CD4-positive, alpha-beta T cell (primary cell): ENCODE measurements at regions of chr1 and their contacts with region 1.

Region 1: DNA sequence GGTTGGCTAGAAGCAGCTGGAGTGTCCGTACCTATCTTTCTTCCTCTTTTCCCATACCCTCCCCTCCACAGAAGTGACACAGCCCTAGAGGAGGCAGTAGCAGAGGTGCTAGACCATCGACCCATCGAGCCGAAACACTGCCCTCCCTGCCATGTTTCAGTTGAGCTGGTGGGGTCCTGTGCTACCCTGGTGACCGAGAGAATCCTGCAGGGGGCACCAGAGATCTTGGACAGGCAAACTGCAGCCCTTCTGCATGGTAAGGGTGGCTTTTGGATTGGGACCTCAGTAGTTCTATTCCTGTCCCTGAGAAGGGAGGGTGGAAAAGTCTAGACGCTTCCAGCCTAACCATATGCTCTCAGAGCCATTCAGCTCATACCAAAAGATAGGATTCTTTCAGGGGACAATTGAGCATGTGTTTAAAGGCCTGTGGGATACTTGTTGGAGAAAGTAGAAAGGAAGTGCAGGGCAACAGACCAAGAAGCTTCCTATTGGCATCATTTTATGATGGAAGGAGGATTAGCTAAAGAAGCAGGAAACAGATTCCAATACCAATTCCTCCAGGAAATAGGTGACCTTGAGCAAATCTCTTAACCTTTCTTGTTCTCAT is 11.7 kb upstream of the BNIPL start:
- DNase-seq: peak; percentile 81 to 95 (median 88)
- ATAC-seq: peak; percentile 100
- H3K4me3 ChIP-seq: no peak overlapping the region
- H3K4me3 Mint-ChIP-seq: no peak overlapping the region
- H3K27ac ChIP-seq: no peak overlapping the region
- H3K27ac Mint-ChIP-seq: peak overlapping the region; percentile 52
- H3K4me1 ChIP-seq: peaks cover 7% of the 10 kb centered on the region
- H3K4me1 Mint-ChIP-seq: peaks cover 6% of the 10 kb centered on the region
- H3K27me3 ChIP-seq: no peaks in the 10 kb centered on the region
- H3K27me3 Mint-ChIP-seq: no peaks in the 10 kb centered on the region
- CTCF ChIP-seq: peak; percentile 83

Region 2: GRCh38 chr1:150561974-150562445 is 462.6 kb before region 1 on chr1:
- CTCF ChIA-PET with region 1: no interaction called
- POLR2A ChIA-PET with region 1: no interaction called
- intact Hi-C with region 1: no loop called
- DNase-seq: peak; percentile 69 to 93 (median 84)
- ATAC-seq: peak; percentile 47
- H3K4me3 ChIP-seq: peak overlapping the region; percentile 90
- H3K4me3 Mint-ChIP-seq: peak overlapping the region; percentile 96
- H3K27ac ChIP-seq: peak overlapping the region; percentile 92 to 97
- H3K27ac Mint-ChIP-seq: peak overlapping the region; percentile 98
- H3K4me1 ChIP-seq: peaks cover 89% of the 10 kb centered on the region
- H3K4me1 Mint-ChIP-seq: peaks cover 63% of the 10 kb centered on the region
- H3K27me3 ChIP-seq: no peaks in the 10 kb centered on the region
- H3K27me3 Mint-ChIP-seq: no peaks in the 10 kb centered on the region
- CTCF ChIP-seq: no peak

Region 3: DNA sequence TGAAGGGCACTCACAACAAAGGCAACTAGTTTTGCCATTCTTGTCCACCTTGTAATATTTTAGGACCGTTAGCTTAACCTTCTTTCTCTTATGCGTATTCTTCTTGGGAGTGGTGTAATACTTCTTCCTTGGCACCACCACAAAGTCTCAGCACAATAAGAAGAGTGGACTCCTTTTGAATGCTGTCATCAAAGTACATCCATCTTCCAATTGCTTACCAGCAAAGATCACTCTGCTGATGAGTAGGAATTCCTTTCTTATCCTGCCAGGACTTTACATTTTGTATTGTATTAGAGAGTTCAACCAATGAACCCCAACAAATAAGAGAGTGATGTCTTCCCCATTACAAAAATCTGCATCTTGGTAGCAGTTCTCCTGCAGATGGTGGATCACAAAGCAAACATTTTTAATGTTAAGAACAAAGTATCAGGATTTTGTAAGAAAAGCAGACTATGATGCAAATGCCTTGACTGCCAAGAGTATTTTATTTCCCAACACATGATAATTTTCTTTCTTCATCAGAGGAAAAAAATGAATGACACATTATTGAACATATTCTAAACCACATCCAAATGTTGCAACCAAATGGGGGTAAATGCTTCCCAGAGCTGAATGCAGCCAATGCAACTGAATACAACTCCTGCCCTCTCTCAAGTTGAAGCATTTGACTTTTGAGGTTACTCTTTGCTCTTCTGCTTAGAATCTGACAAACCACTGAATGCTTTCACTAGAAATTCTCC is 143.1 kb before region 1 on chr1:
- CTCF ChIA-PET with region 1: no interaction called
- POLR2A ChIA-PET with region 1: no interaction called
- intact Hi-C with region 1: no loop called
- DNase-seq: peak in 1 of 14 experiments; percentile 19
- ATAC-seq: no peak
- H3K4me3 ChIP-seq: no peak overlapping the region
- H3K4me3 Mint-ChIP-seq: peak overlapping the region; percentile 31
- H3K27ac ChIP-seq: no peak overlapping the region
- H3K27ac Mint-ChIP-seq: no peak overlapping the region
- H3K4me1 ChIP-seq: peaks cover 11% of the 10 kb centered on the region
- H3K4me1 Mint-ChIP-seq: peaks cover 8% of the 10 kb centered on the region
- H3K27me3 ChIP-seq: no peaks in the 10 kb centered on the region
- H3K27me3 Mint-ChIP-seq: no peaks in the 10 kb centered on the region
- CTCF ChIP-seq: no peak

Region 4: DNA sequence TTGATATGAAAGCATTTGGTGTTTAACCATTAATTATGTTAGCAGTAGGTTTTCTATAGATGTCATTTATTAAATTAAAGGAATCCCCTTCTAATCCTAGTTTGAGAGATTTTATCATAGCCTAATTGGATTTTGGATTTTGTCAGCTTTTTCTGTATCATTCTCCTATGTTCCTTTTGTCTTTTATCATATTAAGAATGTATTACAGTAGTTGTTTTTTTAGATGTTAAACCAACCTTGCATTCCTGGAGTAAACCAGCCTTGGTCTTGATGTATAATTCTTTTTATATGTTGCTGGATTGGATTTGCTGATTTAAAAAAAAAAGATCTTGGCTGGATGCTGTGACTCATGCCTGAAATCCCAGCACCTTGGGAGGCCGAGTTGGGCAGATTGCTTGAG is 92.9 kb before region 1 on chr1:
- CTCF ChIA-PET with region 1: no interaction called
- POLR2A ChIA-PET with region 1: no interaction called
- intact Hi-C with region 1: no loop called
- DNase-seq: peak in 1 of 14 experiments; percentile 32
- ATAC-seq: no peak
- H3K4me3 ChIP-seq: no peak overlapping the region
- H3K4me3 Mint-ChIP-seq: peak overlapping the region; percentile 72
- H3K27ac ChIP-seq: no peak overlapping the region
- H3K27ac Mint-ChIP-seq: no peak overlapping the region
- H3K4me1 ChIP-seq: peaks cover 8% of the 10 kb centered on the region
- H3K4me1 Mint-ChIP-seq: peaks cover 25% of the 10 kb centered on the region
- H3K27me3 ChIP-seq: no peaks in the 10 kb centered on the region
- H3K27me3 Mint-ChIP-seq: no peaks in the 10 kb centered on the region
- CTCF ChIP-seq: no peak

Region 5: DNA sequence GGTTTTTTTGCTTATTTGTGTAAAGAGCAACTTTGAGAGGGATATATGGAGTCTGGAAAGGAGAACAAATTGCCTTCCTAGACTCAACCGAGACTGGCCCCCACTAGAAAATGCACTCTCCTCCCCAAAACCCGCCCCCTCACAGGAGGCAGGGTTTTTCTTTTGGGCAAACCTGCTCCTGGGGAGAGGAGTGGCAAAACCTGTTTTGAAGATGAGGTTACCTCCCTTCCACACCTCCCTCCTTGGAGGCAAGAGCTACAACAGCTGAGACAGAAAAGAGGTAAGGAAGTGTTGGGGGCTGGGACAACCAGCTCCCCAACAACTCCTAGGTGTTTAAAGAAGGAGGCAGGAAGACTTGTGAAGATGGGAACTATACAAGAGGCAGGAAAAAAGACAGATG is 11.7 kb after region 1 on chr1 and contains the start of gene BNIPL:
- CTCF ChIA-PET with region 1: interaction called, 10 read pairs
- POLR2A ChIA-PET with region 1: no interaction called
- intact Hi-C with region 1: no loop called
- DNase-seq: no peak
- ATAC-seq: no peak
- H3K4me3 ChIP-seq: no peak within 1 kb of the TSS
- H3K4me3 Mint-ChIP-seq: no peak within 1 kb of the TSS
- H3K27ac ChIP-seq: no peak within 1 kb of the TSS
- H3K27ac Mint-ChIP-seq: peak within 1 kb of the TSS; percentile 52
- H3K4me1 ChIP-seq: no peaks in the 10 kb centered on the region
- H3K4me1 Mint-ChIP-seq: peaks cover 9% of the 10 kb centered on the region
- H3K27me3 ChIP-seq: no peaks in the 10 kb centered on the region
- H3K27me3 Mint-ChIP-seq: no peaks in the 10 kb centered on the region
- CTCF ChIP-seq: no peak
- total RNA-seq, gene BNIPL: 0.30 to 0.42 TPM

Region 6: DNA sequence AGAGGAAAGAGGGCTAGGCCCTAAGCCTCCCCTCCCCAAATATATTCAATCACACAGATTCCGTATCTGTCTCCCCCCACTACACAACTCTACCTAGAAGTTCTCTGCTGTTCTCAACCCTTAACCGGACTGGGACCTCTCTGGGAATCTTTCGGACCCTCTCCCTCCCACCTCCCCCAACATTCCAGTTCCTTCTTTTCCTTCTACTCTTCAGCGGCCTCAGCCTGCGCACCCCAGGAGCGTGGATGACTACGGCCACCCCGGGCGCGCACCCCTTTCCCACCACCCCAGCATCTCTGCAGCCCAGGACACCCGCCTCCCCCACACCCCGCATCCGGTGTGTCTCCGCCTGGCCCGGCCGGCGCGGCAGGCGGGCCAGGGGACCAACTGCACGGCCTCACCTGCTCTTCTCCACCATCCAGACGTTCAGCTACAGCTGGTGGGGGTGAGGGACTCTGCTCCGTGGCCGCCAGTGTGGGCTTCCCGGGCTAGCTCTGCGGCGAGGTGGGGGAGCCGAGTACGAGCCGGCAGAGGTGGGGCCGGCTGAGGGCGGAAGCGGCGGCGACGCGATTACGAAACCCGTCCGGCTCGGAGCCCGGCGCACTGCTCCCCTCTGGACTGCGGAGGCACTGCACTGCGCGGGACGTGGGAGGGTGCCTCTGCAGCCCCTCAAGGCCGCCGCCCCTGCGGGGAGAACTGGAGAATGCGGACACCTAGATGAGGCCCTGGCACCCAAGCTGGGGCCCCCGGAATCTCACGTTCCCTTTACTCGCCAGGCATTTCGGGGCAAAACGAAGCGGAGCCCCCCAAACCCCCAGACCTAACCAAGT is 34.6 kb after region 1 on chr1 and contains the start of gene CDC42SE1:
- CTCF ChIA-PET with region 1: interaction called, 69 read pairs
- POLR2A ChIA-PET with region 1: interaction called, 31 read pairs
- intact Hi-C with region 1: loop called (anchors 1 to 2 kb)
- DNase-seq: peak; percentile 71 to 94 (median 80)
- ATAC-seq: peak; percentile 76
- H3K4me3 ChIP-seq: peak within 1 kb of the TSS; percentile 64
- H3K4me3 Mint-ChIP-seq: peak within 1 kb of the TSS; percentile 97
- H3K27ac ChIP-seq: peak within 1 kb of the TSS; percentile 88 to 93
- H3K27ac Mint-ChIP-seq: peak within 1 kb of the TSS; percentile 90
- H3K4me1 ChIP-seq: peaks cover 42% of the 10 kb centered on the region
- H3K4me1 Mint-ChIP-seq: peaks cover 56% of the 10 kb centered on the region
- H3K27me3 ChIP-seq: no peaks in the 10 kb centered on the region
- H3K27me3 Mint-ChIP-seq: no peaks in the 10 kb centered on the region
- CTCF ChIP-seq: peak; percentile 81
- total RNA-seq, gene CDC42SE1: 401 to 404 TPM

Region 7: DNA sequence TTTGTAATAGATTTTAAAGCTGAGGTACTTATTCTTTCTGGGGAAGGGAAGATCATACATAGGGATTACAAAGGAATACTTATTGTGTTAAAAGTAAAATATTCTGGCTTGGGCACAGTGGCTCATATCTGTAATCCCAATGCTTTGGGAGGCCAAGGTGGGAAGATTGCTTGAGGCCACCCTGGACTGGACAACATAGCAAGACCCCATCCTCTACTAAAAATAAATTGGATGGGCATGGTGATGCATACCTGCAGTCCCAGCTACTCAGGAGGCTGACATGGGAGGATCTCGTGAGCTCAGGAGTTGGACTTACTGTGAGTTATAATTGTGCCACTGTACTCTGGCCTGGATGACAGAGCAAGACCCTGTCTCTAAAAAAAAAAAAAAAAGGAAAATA is 73.5 kb after region 1 on chr1:
- CTCF ChIA-PET with region 1: interaction called, 21 read pairs
- POLR2A ChIA-PET with region 1: interaction called, 8 read pairs
- intact Hi-C with region 1: loop called in 1 of 2 experiments (anchors 1 kb)
- DNase-seq: no peak
- ATAC-seq: no peak
- H3K4me3 ChIP-seq: no peak overlapping the region
- H3K4me3 Mint-ChIP-seq: no peak overlapping the region
- H3K27ac ChIP-seq: no peak overlapping the region
- H3K27ac Mint-ChIP-seq: no peak overlapping the region
- H3K4me1 ChIP-seq: no peaks in the 10 kb centered on the region
- H3K4me1 Mint-ChIP-seq: no peaks in the 10 kb centered on the region
- H3K27me3 ChIP-seq: no peaks in the 10 kb centered on the region
- H3K27me3 Mint-ChIP-seq: no peaks in the 10 kb centered on the region
- CTCF ChIP-seq: no peak